Activated CD4-positive, alpha-beta T cell treated with anti-CD3 and anti-CD28 coated beads, Interleukin-2, amount 10 ng/mL, durations not matched to agents 24 days and 14 days (primary cell): ENCODE measurements at regions of chr3 and their contacts with region 1.

Region 1: GRCh38 chr3:149752051-149752787 is at the start of gene COMMD2:
- DNase-seq: peak; percentile 92
- H3K4me3 Mint-ChIP-seq: peak within 1 kb of the TSS; percentile 96
- H3K27ac Mint-ChIP-seq: peak within 1 kb of the TSS; percentile 86
- H3K4me1 Mint-ChIP-seq: peaks cover 13% of the 10 kb centered on the region
- H3K27me3 Mint-ChIP-seq: peaks cover 3% of the 10 kb centered on the region
- total RNA-seq, gene COMMD2: 42.1 and 44.2 TPM in 2 replicates

Region 2: DNA sequence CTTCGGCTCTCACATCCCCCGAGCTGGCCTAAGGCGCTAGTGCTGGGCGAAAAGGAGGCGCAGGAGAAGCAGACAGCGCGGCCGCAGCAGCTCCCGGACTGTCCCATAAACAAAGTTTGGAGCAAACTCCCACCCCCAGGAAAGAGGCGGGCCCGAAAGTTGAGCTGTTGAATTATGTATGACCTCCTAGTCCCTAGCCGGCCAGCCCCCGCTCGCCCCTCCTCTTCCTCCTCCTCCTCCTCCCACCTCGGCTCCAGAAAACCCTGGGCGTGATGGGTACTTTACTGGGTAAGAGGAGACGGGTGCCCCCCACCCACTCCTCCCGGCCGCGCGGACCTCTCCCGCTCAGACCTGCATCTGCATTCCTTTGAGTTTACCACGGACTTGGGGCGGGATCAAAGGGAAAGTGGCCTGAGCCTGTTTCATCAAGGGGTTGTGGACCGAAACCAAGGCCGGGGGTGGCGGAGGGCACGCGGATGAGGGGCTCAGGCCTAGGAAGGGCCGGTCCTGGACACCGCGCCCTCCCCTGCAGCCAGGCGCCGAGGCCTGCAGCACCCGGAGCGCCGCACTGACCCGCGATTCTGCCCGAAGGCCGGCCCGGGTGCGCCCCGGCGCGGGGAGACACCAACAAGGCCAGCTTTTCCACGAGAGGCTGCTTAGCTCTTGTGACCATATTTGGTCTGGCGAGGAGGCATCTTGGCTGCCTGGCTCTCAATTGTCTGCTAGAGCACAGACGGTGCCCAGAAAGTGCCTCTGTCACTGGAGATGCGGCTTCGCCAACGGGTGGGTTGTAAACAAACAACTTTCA is 94.1 kb before region 1 on chr3 and contains the start of gene WWTR1:
- intact Hi-C with region 1: loop called (anchors 1 kb)
- DNase-seq: peak; percentile 78
- H3K4me3 Mint-ChIP-seq: peak within 1 kb of the TSS; percentile 89
- H3K27ac Mint-ChIP-seq: peak within 1 kb of the TSS; percentile 74
- H3K4me1 Mint-ChIP-seq: peaks cover 13% of the 10 kb centered on the region
- H3K27me3 Mint-ChIP-seq: peaks cover 59% of the 10 kb centered on the region
- total RNA-seq, gene WWTR1: 0.31 and 0.75 TPM in 2 replicates

Region 3: DNA sequence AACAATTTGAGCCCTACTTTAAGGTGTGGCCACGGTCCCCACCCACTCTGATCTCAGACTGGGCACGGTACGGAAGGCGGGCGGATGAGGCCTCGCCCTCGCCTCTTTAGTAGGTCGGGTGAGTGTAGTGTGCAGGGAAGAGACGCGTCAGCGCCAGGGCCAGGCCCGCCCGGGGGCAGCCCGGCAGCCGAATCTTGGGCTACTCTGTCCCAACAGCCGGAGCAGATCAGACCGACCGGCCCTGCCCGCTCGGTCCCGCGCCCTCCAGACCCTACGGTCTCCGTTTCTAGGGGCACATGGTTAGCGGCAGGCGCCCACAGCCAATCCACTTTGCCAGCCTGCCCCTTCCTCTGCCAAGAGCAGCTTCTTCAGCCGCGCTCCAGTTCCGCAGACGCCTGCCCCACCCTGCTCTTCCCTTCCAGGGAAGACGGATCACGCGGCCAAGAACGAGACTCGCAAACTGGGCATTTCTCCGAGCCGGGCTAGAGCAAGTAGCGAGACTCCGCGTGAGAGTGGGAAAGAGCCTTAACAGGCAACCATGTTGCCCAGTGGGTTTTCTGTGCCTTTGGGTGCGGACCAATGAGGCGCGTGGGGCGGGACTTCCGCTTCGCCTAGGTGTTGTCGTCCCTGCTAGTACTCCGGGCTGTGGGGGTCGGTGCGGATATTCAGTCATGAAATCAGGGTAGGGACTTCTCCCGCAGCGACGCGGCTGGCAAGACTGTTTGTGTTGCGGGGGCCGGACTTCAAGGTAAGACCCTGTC is 60.6 kb after region 1 on chr3 and contains the start of gene RNF13:
- intact Hi-C with region 1: loop called (anchors 1 kb)
- DNase-seq: peak; percentile 98
- H3K4me3 Mint-ChIP-seq: peak within 1 kb of the TSS; percentile 97
- H3K27ac Mint-ChIP-seq: peak within 1 kb of the TSS; percentile 100
- H3K4me1 Mint-ChIP-seq: peaks cover 44% of the 10 kb centered on the region
- H3K27me3 Mint-ChIP-seq: peaks cover 11% of the 10 kb centered on the region
- total RNA-seq, gene RNF13: 31.6 and 36.7 TPM in 2 replicates